ENCODE measurements at regions of chr12 and their contacts with region 1.

Region 1: GRCh38 chr12:98424726-98425401 is 90.5 kb upstream of the TMPO start:
- DNase-seq: peak; percentile 45 to 85 (median 66)
- H3K4me3 ChIP-seq: no peak overlapping the region
- H3K27ac ChIP-seq: no peak overlapping the region
- H3K4me1 ChIP-seq: no peaks in the 10 kb centered on the region
- H3K27me3 ChIP-seq: no peaks in the 10 kb centered on the region
- CTCF ChIP-seq: peak; percentile 57 to 81 (median 68)
- POLR2A ChIP-seq: no peak

Region 2: GRCh38 chr12:98516184-98516873 is 91.5 kb after region 1 on chr12:
- intact Hi-C with region 1: loop called (anchors 5 kb)
- DNase-seq: peak; percentile 60 to 81 (median 69)
- H3K4me3 ChIP-seq: peak overlapping the region; percentile 49 to 99 (median 90)
- H3K27ac ChIP-seq: peak overlapping the region in 4 of 5 donors; percentile 93 to 97 (median 96)
- H3K4me1 ChIP-seq: peaks cover 8 to 30% of the 10 kb centered on the region in 2 donors
- H3K27me3 ChIP-seq: no peaks in the 10 kb centered on the region
- CTCF ChIP-seq: peak; percentile 56 to 80 (median 66)
- POLR2A ChIP-seq: no peak